ENCODE measurements at regions of chr19 and their contacts with region 1.

Region 1: GRCh38 chr19:37466798-37467607 is at the start of gene ZNF569:
- DNase-seq: peak; percentile 95
- ATAC-seq: peak; percentile 71
- H3K4me3 ChIP-seq: peak within 1 kb of the TSS; percentile 81
- H3K27ac ChIP-seq: peak within 1 kb of the TSS; percentile 82
- H3K4me1 ChIP-seq: peaks cover 2% of the 10 kb centered on the region; the same call in 1 of the 2 replicates
- H3K27me3 ChIP-seq: no peaks in the 10 kb centered on the region
- CTCF ChIP-seq: no peak
- POLR2A ChIP-seq: no peak
- RAD21 ChIP-seq: no peak
- total RNA-seq, gene ZNF569: 5.9 and 6.7 TPM in 2 replicates

Region 2: DNA sequence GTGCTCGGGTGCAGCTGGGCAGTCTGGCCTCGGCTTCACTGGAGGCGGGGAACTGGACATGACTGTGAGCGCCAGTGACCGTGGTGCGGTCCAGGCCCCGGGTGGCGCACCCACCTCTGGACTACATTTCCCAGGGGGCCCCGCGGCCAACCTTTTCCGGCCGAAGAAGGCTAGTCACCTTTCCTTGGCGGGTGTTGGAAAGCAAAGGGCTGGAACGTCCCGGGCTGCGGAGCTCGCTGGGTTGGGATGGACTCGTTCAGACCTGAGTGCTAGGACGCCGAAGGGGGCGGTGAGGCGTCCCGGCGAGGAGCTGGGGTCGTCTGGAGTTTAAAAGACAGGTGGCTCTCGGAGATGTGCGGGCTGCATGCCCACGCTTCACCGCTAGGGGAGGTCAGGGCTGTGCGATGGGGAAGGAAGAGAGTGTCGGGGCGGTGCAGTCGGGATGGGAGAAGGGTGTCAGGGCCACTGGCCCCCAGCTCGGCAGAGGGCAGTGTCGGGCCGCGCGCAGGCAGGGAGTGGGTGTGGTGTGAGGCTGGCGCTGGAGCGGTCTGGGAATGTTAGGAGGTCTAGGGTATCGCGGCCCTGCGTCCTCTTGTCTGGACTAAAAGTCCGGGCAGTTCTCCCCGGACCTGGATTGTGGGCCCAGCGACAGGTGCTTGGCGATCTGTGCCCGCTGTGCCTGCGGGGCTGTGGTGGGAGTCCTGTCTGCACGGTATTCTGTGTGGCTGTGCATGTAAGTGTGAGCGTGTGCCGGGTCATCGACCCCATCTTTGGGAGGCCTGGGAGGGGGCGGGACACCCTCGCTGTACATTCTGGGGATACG is 493.8 kb before region 1 on chr19:
- CTCF ChIA-PET with region 1: no interaction called
- POLR2A ChIA-PET with region 1: no interaction called
- dilution Hi-C with region 1: no loop called
- in situ Hi-C with region 1: no loop called
- intact Hi-C with region 1: loop called (anchors 5 kb)
- DNase-seq: peak; percentile 50
- ATAC-seq: peak; percentile 97
- H3K4me3 ChIP-seq: peak overlapping the region; percentile 96
- H3K27ac ChIP-seq: peak overlapping the region; percentile 75
- H3K4me1 ChIP-seq: no peaks in the 10 kb centered on the region; the same call in 1 of the 2 replicates
- H3K27me3 ChIP-seq: no peaks in the 10 kb centered on the region
- CTCF ChIP-seq: peak; percentile 54
- POLR2A ChIP-seq: no peak
- RAD21 ChIP-seq: peak; percentile 48

Region 3: GRCh38 chr19:37334179-37335071 is 132.6 kb before region 1 on chr19:
- CTCF ChIA-PET with region 1: no interaction called
- POLR2A ChIA-PET with region 1: no interaction called
- dilution Hi-C with region 1: no loop called
- in situ Hi-C with region 1: no loop called
- intact Hi-C with region 1: loop called (anchors 5 kb)
- DNase-seq: peak; percentile 86
- ATAC-seq: peak; percentile 97
- H3K4me3 ChIP-seq: peak overlapping the region; percentile 55
- H3K27ac ChIP-seq: peak overlapping the region; percentile 47
- H3K4me1 ChIP-seq: peaks cover 7% of the 10 kb centered on the region
- H3K27me3 ChIP-seq: no peaks in the 10 kb centered on the region
- CTCF ChIP-seq: no peak
- POLR2A ChIP-seq: peak; percentile 41; the same call in 1 of the 2 replicates
- RAD21 ChIP-seq: no peak

Region 4: DNA sequence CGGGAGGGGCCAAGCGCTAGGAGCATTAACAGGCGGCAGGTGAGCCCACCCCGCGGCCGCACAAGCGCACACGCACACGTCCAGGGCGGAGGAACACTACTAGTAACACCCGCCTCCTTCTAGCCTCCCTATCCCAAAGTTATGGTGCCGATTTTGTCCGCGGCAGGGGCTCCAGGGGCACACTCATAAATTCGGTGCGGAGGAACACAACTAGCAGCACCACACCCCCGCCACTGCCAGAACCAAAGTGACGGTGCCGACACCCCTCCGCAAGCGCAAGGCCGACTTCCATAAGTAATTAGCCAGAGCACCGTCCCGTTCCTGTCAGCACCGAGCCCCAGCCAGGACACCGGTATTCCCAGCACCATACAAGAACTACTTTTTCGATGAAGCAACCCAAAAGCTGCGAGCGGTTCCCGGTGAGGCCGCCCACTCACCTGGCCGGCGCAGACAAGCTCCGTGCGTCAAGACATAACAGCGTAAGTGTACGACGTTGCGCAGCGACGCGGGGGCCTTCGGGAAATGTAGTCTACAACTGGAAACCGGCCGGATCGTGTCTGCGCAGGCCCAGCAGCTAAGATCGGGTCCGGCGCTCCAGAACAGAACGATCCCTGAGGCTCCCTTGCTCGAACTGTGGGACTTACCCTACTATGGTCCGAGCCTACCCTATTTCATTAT is 127.4 kb after region 1 on chr19 and contains the starts of genes ZNF540 and ZNF571:
- CTCF ChIA-PET with region 1: no interaction called
- POLR2A ChIA-PET with region 1: no interaction called
- dilution Hi-C with region 1: no loop called
- in situ Hi-C with region 1: no loop called
- intact Hi-C with region 1: loop called (anchors 1 kb)
- DNase-seq: peak; percentile 93
- ATAC-seq: peak; percentile 99
- H3K4me3 ChIP-seq: peak within 1 kb of the TSS; percentile 91
- H3K27ac ChIP-seq: peak within 1 kb of the TSS; percentile 51
- H3K4me1 ChIP-seq: no peaks in the 10 kb centered on the region
- H3K27me3 ChIP-seq: no peaks in the 10 kb centered on the region
- CTCF ChIP-seq: no peak
- POLR2A ChIP-seq: 0 out of 2 replicates have a peak, but pooled peaks have one; percentile 38
- RAD21 ChIP-seq: no peak
- total RNA-seq, gene ZNF540: 0.28 and 0.54 TPM in 2 replicates
- total RNA-seq, gene ZNF571: 2.2 and 2.5 TPM in 2 replicates

Region 5: DNA sequence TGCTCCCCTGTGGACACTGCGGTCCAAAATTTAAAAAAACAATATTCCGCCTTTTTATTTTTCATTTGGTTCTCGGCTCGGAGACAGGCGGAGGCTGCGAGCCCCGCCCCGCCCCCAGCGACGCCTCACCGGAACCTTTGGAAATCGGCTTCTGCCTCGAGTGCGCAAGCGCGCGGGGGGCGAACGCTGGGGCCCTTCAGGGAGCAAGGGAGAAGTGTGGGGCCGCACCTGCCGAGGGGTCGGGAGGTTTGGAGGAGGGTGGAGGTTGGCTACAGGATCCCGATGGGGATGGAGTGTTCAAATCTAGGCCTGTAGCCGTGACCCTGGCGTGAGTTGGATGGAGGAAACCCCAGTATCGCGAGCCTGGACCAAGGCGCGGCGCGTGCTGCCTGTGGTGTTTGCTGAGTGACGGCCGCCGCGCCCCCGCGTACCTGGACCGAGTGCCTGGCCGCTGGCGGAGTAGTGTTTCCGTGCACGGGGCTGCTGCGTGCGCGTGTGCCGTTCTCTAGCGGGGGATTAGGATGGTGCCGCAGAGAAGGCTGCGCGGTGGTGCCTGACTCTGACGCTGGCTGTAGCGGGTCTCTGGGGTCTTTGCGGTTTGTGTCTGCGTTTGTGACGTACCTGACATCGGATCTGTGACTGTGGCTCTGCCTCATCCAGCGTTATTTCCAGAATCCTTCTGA is 188.8 kb after region 1 on chr19:
- CTCF ChIA-PET with region 1: no interaction called
- POLR2A ChIA-PET with region 1: no interaction called
- dilution Hi-C with region 1: no loop called
- in situ Hi-C with region 1: no loop called
- intact Hi-C with region 1: loop called (anchors 5 kb)
- DNase-seq: peak; percentile 68
- ATAC-seq: peak; percentile 78
- H3K4me3 ChIP-seq: peak overlapping the region; percentile 89
- H3K27ac ChIP-seq: peak overlapping the region; percentile 71
- H3K4me1 ChIP-seq: no peaks in the 10 kb centered on the region
- H3K27me3 ChIP-seq: no peaks in the 10 kb centered on the region
- CTCF ChIP-seq: no peak; the same call in 1 of the 2 replicates
- POLR2A ChIP-seq: no peak; the same call in 1 of the 2 replicates
- RAD21 ChIP-seq: no peak

Region 6: DNA sequence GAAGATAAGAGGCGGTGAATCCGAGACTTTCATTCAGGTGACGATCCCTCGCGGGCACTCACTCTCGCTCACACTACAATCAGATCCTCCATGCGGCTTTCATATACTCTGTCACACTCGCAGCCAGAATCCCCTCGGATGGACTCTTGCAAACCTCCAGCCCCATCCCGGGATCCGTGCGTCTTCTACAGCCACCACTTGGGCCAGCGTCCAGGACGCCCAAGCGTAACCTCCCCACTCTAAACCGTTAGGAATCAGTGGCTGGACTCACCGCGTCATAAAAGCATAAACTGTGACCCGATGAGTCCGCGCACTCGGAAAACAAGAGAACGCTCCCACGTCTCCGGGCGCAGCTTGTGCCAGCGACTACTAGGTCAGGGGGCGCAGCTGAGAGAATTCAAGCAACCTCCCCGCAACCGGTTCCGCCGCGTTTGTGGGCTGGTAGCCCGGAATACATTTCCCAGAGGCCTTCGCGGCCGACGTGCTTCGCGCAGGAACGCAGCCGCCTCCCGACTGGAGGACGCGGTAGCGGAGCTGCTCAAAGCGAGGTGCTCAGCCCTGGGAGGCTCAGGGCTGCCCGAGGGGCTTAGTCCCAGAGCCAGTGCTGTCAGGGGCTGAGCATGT is 225.0 kb after region 1 on chr19:
- CTCF ChIA-PET with region 1: no interaction called
- POLR2A ChIA-PET with region 1: no interaction called
- dilution Hi-C with region 1: no loop called
- in situ Hi-C with region 1: no loop called
- intact Hi-C with region 1: loop called (anchors 10 kb)
- DNase-seq: peak; percentile 80
- ATAC-seq: peak; percentile 98
- H3K4me3 ChIP-seq: peak overlapping the region; percentile 75
- H3K27ac ChIP-seq: peak overlapping the region; percentile 49
- H3K4me1 ChIP-seq: no peaks in the 10 kb centered on the region; the same call in 1 of the 2 replicates
- H3K27me3 ChIP-seq: no peaks in the 10 kb centered on the region
- CTCF ChIP-seq: peak; percentile 6; the same call in 1 of the 2 replicates
- POLR2A ChIP-seq: 0 out of 2 replicates have a peak, but pooled peaks have one; percentile 39
- RAD21 ChIP-seq: no peak